ENCODE measurements at regions of chr12 and their contacts with region 1.

Region 1: DNA sequence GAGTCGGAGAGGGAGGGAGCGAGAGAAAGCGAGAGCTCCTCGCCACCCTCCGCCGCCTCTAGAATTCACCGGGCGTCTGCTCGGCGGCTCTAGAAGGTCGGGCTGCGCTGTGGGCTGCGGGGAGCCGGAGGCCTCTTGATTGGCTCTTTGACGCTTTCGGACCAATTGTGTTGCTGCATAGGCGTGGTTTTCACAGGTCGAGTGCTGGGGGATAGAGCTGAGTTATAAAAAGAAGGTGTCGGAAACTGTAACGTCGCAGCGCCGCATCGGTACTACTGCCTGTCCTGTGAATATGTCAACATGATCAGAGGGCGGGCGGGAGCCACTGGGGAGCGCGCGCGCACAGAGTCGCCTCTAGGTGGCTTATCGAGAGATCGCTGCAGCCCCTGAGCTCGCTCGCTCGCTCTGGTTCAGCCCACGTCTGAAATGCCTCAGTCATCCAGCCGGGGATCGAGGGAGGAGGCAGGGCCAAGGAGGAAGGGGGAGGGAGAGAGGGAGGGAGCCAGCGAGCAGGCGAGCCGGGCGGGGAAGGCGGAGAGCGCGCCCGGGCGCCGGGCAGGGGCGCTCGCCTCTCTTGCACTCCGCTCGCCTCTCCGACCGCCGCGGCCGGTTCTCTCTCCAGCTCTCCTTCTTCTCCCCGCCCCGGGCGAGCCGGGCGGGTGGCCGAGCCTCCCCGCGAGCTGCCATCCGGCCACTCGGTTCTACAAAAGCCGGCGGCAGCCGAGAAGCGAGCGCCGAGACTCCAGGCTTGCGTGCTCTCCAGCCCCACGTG is at the start of gene TBX3:
- DNase-seq: peak; percentile 96 to 97
- ATAC-seq: peak; percentile 89 to 92 (median 90)
- H3K4me3 ChIP-seq: peak within 1 kb of the TSS; percentile 78
- H3K27ac ChIP-seq: peak within 1 kb of the TSS; percentile 90
- H3K4me1 ChIP-seq: peaks cover 9% of the 10 kb centered on the region
- H3K27me3 ChIP-seq: peaks cover 0 to 34% (median 7%) of the 10 kb centered on the region in 3 donors
- CTCF ChIP-seq: peak; percentile 49
- total RNA-seq, gene TBX3: 7.4 to 50.8 (median 30.8) TPM

Region 2: DNA sequence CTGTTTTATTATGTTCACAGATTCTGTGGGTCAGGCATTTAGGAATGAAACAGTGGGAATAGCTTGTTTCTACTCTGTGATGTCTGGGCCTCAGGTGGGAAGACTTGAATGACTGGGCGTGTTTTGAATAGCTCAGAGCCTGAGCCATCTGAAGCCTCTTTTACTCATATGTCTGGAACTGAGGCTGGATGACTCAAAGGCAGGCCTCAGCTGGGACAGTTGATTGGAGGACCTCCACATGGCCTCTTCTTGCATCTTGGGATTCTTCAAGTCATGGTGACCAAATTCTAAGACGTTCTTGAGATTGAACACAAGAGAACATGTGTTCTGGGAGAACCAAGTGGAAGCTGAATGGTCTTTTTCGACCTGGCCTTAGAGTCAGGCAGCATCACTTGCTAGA is 45.4 kb after region 1 on chr12:
- intact Hi-C with region 1: no loop called
- DNase-seq: no peak
- ATAC-seq: no peak
- H3K4me3 ChIP-seq: no peak overlapping the region
- H3K27ac ChIP-seq: no peak overlapping the region
- H3K4me1 ChIP-seq: peaks cover 7% of the 10 kb centered on the region
- H3K27me3 ChIP-seq: peaks cover 0 to 12% (median 8%) of the 10 kb centered on the region in 3 donors
- CTCF ChIP-seq: no peak

Region 3: DNA sequence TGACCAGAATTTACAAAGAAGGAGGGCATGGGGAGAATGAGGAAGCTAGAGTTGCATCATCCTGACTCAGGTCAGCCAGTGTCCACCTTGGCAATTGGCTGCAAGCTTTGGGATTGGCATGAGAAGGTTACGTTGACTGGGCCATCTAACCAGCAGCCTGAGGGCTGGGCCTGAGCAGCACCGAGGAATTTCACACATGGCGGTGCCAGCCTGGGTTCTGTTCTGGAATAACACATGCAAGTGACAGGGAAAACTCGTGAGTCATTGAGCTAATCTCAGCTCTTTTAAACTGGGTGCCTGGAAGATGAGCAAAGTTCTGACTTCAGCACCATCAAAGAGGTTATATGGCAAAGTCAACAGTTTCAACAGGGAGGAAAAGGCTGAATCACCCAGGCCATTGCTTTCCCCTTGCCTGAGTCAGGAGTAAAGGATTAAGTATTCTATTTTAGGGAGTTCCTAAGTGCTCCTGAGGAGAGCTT is 542.9 kb after region 1 on chr12:
- intact Hi-C with region 1: loop called in 1 of 2 experiments (anchors 10 kb)
- DNase-seq: peak; percentile 75 to 90
- ATAC-seq: peak; percentile 92 to 95 (median 94)
- H3K4me3 ChIP-seq: no peak overlapping the region
- H3K27ac ChIP-seq: peak overlapping the region; percentile 88
- H3K4me1 ChIP-seq: peaks cover 22% of the 10 kb centered on the region
- H3K27me3 ChIP-seq: no peaks in the 10 kb centered on the region
- CTCF ChIP-seq: no peak

Measured in psoas muscle (tissue), 8 donors.